ENCODE measurements at regions of chrX and their contacts with region 1.

Region 1: GRCh38 chrX:74911494-74911893 is 13.8 kb downstream of the NEXMIF start:
- DNase-seq: no peak
- ATAC-seq: peak; percentile 83
- H3K4me3 ChIP-seq: no peak overlapping the region
- H3K27ac ChIP-seq: peak overlapping the region; percentile 41; the same call in 1 of the 2 replicates
- H3K4me1 ChIP-seq: no peaks in the 10 kb centered on the region
- H3K27me3 ChIP-seq: no peaks in the 10 kb centered on the region
- CTCF ChIP-seq: no peak
- EP300 ChIP-seq: no peak
- POLR2A ChIP-seq: no peak
- RAD21 ChIP-seq: no peak

Region 2: DNA sequence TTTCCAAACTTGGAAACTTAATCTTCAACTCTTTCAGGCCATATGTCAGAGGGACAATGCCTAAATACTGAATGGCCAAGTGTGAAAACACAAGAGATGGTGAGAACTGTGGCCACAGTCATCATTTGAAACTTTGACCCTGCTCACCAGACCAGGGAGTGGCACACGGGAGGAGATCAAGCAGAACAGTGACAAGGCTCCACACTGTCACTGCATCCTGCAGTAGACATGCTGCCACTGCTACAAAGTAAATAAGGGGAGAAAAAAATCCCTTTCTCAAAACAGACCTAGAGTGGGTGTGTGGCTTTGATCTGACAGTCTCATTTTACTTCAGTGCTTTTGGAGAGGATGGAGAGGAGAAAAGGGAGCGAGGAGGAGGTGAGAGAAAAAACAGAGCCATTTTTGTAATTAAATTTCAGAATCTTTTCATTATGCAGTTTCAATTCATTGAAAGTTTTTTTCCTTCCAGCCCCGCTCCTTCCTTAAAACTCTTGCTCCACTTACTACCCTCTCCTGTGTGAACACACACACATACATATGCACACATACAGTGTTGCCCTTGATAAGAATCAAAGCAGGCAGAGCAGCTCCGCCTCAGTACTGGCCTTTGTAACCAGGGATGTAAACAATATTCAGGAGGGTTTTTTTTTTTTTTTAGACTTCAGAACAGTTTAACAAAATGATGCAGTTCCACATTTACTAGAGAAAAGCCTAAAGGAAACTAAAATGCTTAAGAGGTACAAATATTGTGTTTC is 20.6 kb before region 1 on chrX:
- CTCF ChIA-PET with region 1: no interaction called
- POLR2A ChIA-PET with region 1: no interaction called
- RAD21 ChIA-PET with region 1: interaction called, 4 read pairs
- SMC1A ChIA-PET with region 1: interaction called, 3 read pairs
- in situ Hi-C with region 1: no loop called
- intact Hi-C with region 1: loop called (anchors 1 kb)
- DNase-seq: peak; percentile 80
- ATAC-seq: peak; percentile 95
- H3K4me3 ChIP-seq: no peak overlapping the region
- H3K27ac ChIP-seq: peak overlapping the region; percentile 45
- H3K4me1 ChIP-seq: no peaks in the 10 kb centered on the region
- H3K27me3 ChIP-seq: no peaks in the 10 kb centered on the region
- CTCF ChIP-seq: no peak
- EP300 ChIP-seq: no peak
- POLR2A ChIP-seq: no peak
- RAD21 ChIP-seq: peak; percentile 27; the same call in 1 of the 2 replicates

Region 3: DNA sequence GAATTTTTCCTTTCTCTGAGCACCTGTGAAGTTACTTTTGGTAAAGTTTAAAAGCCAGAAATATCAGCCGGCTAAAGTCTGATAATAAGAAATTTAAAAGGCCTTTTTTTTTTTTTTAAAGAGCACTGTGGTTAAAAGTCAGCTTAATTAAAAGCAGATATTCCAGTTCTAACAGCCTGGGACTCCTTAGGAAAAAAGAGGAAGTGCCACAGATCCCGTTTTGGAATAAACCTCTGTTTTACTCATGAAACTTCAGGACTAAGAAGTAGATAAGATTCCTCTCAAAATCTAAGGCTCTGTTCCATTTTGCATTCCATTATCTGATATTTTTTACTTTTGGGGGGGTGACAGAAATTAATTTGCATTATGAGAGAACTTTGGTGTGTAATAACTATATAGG is 206.8 kb after region 1 on chrX:
- CTCF ChIA-PET with region 1: no interaction called
- POLR2A ChIA-PET with region 1: no interaction called
- RAD21 ChIA-PET with region 1: no interaction called
- SMC1A ChIA-PET with region 1: no interaction called
- in situ Hi-C with region 1: no loop called
- intact Hi-C with region 1: no loop called
- DNase-seq: no peak
- ATAC-seq: no peak
- H3K4me3 ChIP-seq: no peak overlapping the region
- H3K27ac ChIP-seq: no peak overlapping the region
- H3K4me1 ChIP-seq: no peaks in the 10 kb centered on the region
- H3K27me3 ChIP-seq: no peaks in the 10 kb centered on the region
- CTCF ChIP-seq: no peak
- EP300 ChIP-seq: no peak
- POLR2A ChIP-seq: no peak
- RAD21 ChIP-seq: no peak